GM10248 (cell line): ENCODE measurements at regions of chr18 and their contacts with region 1.

Region 1: GRCh38 chr18:54392543-54393023 is 34.9 kb downstream of the C18orf54 start:
- DNase-seq: peak; percentile 45
- CTCF ChIP-seq: peak; percentile 70

Region 2: GRCh38 chr18:54378057-54378456 is 14.5 kb before region 1 on chr18:
- CTCF ChIA-PET with region 1: interaction called, 11 read pairs
- POLR2A ChIA-PET with region 1: no interaction called
- DNase-seq: no peak
- CTCF ChIP-seq: no peak